ENCODE measurements at regions of chr3 and their contacts with region 1.

Region 1: DNA sequence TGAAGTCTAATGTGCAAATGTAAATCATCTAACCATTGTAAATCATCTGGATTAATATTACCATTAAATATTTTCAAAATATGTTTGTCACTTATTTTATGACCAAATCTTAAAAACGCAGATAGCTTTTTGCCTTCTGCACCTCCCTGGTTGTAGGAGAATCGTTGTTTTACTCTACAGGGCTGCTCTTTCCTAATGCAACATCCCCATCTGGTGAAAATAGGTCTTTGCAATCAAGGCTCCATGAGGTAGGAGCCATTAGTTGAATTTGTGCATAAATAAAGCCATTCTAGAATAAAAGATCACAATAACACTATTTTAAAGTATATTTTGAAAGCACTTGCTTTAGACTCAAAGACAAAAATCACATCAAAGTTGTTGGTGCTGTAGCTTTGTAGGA is 535.6 kb upstream of the AGTR1 start:
- DNase-seq: no peak
- H3K4me3 ChIP-seq: no peak overlapping the region
- CTCF ChIP-seq: peak; percentile 21

Region 2: DNA sequence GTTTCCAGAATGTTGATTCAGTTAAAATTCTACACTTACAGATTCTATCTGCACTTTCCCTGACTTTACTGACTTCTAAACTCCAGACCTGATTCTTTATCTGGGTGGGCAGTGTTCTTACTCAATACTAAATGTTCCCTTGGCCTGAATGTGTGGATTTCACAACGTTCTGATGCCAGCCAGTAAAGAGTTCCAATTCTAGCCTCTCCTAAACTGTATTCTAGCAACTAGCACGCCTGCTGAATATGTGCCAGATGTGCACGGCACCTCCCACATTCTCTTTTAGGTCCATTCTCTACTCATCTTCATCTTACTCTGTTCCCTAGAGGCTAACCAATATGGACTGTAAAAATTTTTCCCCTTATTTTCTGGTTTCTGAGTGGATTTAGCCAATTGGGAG is 56.1 kb after region 1 on chr3:
- in situ Hi-C with region 1: loop called (anchors 5 kb)
- DNase-seq: no peak
- H3K4me3 ChIP-seq: no peak overlapping the region
- CTCF ChIP-seq: no peak

Measured in astrocyte of the cerebellum (primary cell).